ENCODE measurements at regions of chr16 and their contacts with region 1.

Region 1: DNA sequence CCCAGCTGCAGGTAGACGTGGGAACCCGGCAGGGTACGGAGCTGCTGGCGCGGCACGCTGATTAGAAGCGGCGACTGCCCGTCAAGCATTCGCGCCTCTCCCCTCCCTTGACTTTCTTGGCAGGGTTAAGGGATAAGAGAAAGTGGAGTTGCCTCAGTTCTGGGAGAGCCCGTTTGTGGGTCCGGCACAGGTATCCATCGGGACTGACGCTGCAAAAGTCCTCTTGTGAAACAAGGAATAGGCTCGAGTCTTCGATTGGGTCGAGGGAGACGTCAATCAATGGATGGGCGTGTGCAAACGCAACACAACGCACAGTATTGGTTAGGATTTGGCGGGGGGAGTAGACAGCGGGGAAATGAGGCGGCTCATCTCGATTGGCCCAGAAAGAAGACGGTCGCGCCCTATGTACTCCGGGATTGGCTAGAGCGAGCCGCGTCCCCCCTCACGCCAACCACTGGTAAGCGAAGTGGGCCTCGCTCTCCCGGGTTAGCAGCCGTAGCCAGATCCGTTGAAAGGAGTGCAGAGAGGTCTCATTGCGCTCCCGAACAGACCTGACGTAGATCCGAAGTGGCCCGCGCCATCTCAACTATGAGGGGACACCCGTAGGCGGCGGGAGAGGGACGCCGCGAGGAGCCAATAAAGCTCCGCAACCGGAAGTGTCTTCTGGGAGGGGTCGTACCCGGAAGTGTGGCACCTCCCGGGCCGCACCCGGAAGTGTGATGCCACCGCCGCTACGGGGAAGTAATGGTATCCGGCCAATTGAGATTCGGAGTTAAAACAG is at the start of gene MON1B:
- DNase-seq: peak; percentile 96
- ATAC-seq: peak; percentile 98
- H3K4me3 ChIP-seq: peak within 1 kb of the TSS; percentile 99
- H3K27ac ChIP-seq: peak within 1 kb of the TSS; percentile 87
- H3K4me1 ChIP-seq: no peaks in the 10 kb centered on the region; the same call in 1 of the 2 replicates
- H3K27me3 ChIP-seq: no peaks in the 10 kb centered on the region
- CTCF ChIP-seq: no peak
- EP300 ChIP-seq: 0 out of 4 replicates have a peak, but pooled peaks of 1 of the 2 experiments have one; percentile 10
- POLR2A ChIP-seq: peak; percentile 93
- RAD21 ChIP-seq: no peak
- polyA plus RNA-seq, gene MON1B: 5.7 to 7.6 TPM

Region 2: DNA sequence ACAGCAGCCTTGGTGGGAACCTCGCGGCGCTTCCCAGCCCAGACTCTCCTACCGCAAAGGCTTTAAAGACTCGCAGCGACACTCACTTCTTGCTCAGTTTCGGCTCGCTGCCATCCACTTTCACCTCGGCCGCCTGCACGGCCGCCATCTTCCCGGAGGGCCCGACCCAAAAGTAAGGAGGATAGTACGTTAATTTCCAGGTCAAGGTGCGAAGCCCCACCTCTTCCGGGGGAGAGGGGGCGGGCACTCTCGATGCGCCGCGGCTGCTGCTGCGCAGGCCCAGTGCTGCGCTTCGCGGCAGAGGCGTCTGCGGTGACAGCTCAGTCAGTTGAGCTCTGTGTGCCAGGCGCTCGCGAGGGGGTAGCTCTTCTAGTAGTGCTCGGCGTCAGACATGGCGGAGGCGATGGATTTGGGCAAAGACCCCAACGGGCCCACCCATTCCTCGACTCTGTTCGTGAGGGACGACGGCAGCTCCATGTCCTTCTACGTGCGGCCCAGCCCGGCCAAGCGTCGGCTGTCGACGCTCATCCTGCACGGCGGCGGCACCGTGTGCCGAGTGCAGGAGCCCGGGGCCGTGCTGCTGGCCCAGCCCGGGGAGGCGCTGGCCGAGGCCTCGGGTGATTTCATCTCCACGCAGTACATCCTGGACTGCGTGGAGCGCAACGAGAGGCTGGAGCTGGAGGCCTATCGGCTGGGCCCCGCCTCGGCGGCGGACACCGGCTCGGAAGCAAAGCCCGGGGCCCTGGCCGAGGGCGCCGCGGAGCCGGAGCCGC is 1543.0 kb before region 1 on chr16 and contains the starts of genes KARS1 and TERF2IP:
- CTCF ChIA-PET with region 1: no interaction called
- POLR2A ChIA-PET with region 1: no interaction called
- RAD21 ChIA-PET with region 1: no interaction called
- SMC1A ChIA-PET with region 1: no interaction called
- in situ Hi-C with region 1: loop called (anchors 5 kb)
- intact Hi-C with region 1: loop called (anchors 10 kb)
- DNase-seq: peak; percentile 85
- ATAC-seq: peak; percentile 91
- H3K4me3 ChIP-seq: peak within 1 kb of the TSS; percentile 85
- H3K27ac ChIP-seq: peak within 1 kb of the TSS; percentile 86
- H3K4me1 ChIP-seq: peaks cover 25% of the 10 kb centered on the region
- H3K27me3 ChIP-seq: no peaks in the 10 kb centered on the region; a peak in 1 of 4 replicates
- CTCF ChIP-seq: no peak
- EP300 ChIP-seq: no peak
- POLR2A ChIP-seq: peak; percentile 98
- RAD21 ChIP-seq: no peak
- polyA plus RNA-seq, gene KARS1: 187 to 207 TPM
- polyA plus RNA-seq, gene TERF2IP: 19.6 to 40.6 TPM

Region 3: DNA sequence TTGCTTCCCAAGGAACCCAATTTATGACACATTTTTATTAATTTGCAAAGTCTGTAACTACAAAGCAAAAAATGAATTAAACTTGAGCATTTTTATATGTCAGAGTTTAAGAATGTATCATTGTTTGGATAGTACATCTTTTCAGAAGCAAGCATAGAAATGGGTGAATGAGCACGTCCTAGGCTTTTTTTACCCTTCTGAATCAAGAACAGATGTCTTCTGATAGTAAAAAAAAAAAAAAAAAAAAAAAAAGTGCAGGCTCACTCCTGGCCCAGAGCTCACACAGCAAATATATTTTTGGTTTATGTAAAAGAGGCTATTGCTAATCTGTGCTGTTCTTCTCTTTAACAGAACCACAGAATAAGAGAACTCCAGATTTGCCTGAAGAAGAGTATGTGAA is 1536.7 kb before region 1 on chr16:
- CTCF ChIA-PET with region 1: no interaction called
- POLR2A ChIA-PET with region 1: no interaction called
- RAD21 ChIA-PET with region 1: no interaction called
- SMC1A ChIA-PET with region 1: no interaction called
- in situ Hi-C with region 1: loop called (anchors 5 kb)
- intact Hi-C with region 1: loop called (anchors 10 kb)
- DNase-seq: no peak
- ATAC-seq: no peak
- H3K4me3 ChIP-seq: 0 out of 2 replicates have a peak overlapping the region, but pooled peaks have one; percentile 8
- H3K27ac ChIP-seq: peak overlapping the region; percentile 10; the same call in 1 of the 2 replicates
- H3K4me1 ChIP-seq: peaks cover 7% of the 10 kb centered on the region; the same call in 1 of the 2 replicates
- H3K27me3 ChIP-seq: no peaks in the 10 kb centered on the region
- CTCF ChIP-seq: no peak
- EP300 ChIP-seq: no peak
- POLR2A ChIP-seq: no peak
- RAD21 ChIP-seq: no peak

Region 4: GRCh38 chr16:77289331-77289809 is 98.7 kb after region 1 on chr16:
- CTCF ChIA-PET with region 1: no interaction called
- POLR2A ChIA-PET with region 1: no interaction called
- RAD21 ChIA-PET with region 1: no interaction called
- SMC1A ChIA-PET with region 1: no interaction called
- in situ Hi-C with region 1: no loop called
- intact Hi-C with region 1: no loop called
- DNase-seq: no peak
- ATAC-seq: no peak
- H3K4me3 ChIP-seq: no peak overlapping the region
- H3K27ac ChIP-seq: no peak overlapping the region
- H3K4me1 ChIP-seq: no peaks in the 10 kb centered on the region
- H3K27me3 ChIP-seq: no peaks in the 10 kb centered on the region
- CTCF ChIP-seq: no peak
- EP300 ChIP-seq: no peak
- POLR2A ChIP-seq: no peak
- RAD21 ChIP-seq: no peak